ENCODE measurements at regions of chr7 and their contacts with region 1.

Region 1: DNA sequence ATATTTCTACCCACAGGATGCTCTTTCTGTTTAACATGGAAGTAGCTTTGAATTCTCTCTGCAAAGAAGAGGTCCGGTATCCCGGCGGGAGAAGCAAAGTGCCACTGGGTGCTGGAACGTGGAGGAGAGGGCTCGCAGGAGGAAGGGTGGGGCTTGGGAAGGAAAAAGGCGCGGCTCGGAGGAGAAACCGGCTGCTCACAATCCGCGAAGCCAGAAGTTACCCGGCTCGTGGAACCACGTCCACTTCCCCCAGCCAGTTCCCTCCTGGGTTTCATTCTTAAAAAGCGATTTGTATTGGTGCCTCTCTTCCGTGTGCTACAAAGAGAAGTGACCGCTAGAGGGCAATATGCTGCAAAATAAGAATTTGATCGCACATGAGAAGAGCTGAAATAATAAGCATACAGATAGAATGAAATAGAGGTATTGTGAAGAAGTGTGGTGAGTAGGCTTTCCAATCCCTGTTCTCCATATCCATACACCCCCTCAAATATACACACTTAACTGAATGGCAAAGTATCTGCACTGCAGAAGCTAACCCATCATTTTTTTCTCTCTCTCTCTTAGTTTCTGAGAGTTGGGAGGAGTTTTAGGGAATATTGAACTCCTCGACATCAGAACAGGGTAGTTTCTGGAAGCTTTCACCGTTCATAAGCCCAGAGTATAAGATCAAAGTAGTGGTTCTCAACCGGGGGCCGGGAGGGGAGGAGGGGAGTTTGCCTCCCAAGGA is 31.1 kb downstream of the TRIL start:
- DNase-seq: peak; percentile 84
- ATAC-seq: peak; percentile 93
- H3K4me3 ChIP-seq: peak overlapping the region; percentile 28 to 61 (median 54)
- H3K4me3 Mint-ChIP-seq: peak overlapping the region; percentile 94
- H3K27ac ChIP-seq: no peak overlapping the region
- H3K27ac Mint-ChIP-seq: no peak overlapping the region
- H3K4me1 ChIP-seq: peaks cover 10 to 21% of the 10 kb centered on the region in 2 donors
- H3K4me1 Mint-ChIP-seq: peaks cover 23% of the 10 kb centered on the region
- H3K27me3 ChIP-seq: no peaks in the 10 kb centered on the region
- H3K27me3 Mint-ChIP-seq: peaks cover 14% of the 10 kb centered on the region
- CTCF ChIP-seq: peak; percentile 85

Region 2: GRCh38 chr7:28908775-28909174 is 18.3 kb before region 1 on chr7:
- CTCF ChIA-PET with region 1: interaction called, 128 read pairs
- POLR2A ChIA-PET with region 1: no interaction called
- intact Hi-C with region 1: no loop called
- DNase-seq: no peak
- ATAC-seq: no peak
- H3K4me3 ChIP-seq: no peak overlapping the region
- H3K4me3 Mint-ChIP-seq: no peak overlapping the region
- H3K27ac ChIP-seq: no peak overlapping the region
- H3K27ac Mint-ChIP-seq: no peak overlapping the region
- H3K4me1 ChIP-seq: no peaks in the 10 kb centered on the region
- H3K4me1 Mint-ChIP-seq: no peaks in the 10 kb centered on the region
- H3K27me3 ChIP-seq: peaks cover 0 to 5% (median 1%) of the 10 kb centered on the region in 4 experiments
- H3K27me3 Mint-ChIP-seq: peaks cover 19% of the 10 kb centered on the region
- CTCF ChIP-seq: no peak

Region 3: GRCh38 chr7:28939844-28940544 is 13.0 kb after region 1 on chr7:
- CTCF ChIA-PET with region 1: interaction called, 127 read pairs
- POLR2A ChIA-PET with region 1: no interaction called
- intact Hi-C with region 1: no loop called
- DNase-seq: no peak
- ATAC-seq: no peak
- H3K4me3 ChIP-seq: no peak overlapping the region
- H3K4me3 Mint-ChIP-seq: no peak overlapping the region
- H3K27ac ChIP-seq: no peak overlapping the region
- H3K27ac Mint-ChIP-seq: no peak overlapping the region
- H3K4me1 ChIP-seq: no peaks in the 10 kb centered on the region
- H3K4me1 Mint-ChIP-seq: no peaks in the 10 kb centered on the region
- H3K27me3 ChIP-seq: peaks cover 0 to 6% (median 2%) of the 10 kb centered on the region in 4 experiments
- H3K27me3 Mint-ChIP-seq: peaks cover 48% of the 10 kb centered on the region
- CTCF ChIP-seq: no peak

Region 4: DNA sequence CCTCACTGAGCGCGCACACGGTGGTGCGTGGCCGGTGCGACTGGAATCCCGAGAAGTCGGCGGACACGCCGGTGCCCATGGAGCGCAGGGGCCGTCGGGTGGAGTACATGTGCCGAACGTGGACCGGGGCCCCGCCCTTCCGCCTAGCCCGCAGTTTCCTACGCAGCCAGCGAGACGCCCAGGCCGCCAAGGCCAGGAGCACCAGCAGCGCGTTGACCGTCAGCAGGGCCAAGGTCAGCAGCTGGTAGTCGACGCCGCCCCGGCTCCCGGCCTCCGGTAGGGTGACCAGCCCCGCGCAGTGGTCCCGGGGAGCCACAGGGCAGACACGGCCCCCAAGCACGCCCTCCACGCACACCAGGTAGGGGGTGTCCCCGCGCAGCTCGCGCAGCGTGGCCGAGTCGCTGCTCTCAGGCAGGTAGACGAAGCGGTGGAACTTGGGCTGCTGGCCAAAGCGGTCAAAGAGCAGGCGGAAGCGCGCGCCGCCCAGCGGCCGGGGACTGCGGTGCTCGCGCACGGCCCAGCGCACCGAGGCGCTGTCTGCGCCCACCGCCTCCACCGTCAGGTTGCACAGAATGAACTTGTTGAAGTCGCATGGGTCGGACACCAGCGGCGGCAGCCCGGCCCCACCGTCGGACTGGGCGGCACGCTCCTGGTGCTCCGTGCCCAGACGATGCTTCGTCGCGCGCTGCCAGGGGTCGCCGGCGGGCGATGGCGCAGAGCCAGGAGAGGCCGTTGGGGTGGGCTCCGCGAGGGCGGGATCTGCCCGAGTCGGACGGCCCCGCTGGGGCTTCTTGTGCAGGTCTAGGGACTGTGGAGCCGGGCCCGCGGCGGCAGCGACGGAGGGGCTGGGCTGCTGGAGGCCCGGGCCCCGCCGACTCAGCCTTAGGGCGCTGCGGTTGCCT is 28.9 kb after region 1 on chr7:
- CTCF ChIA-PET with region 1: interaction called, 21 read pairs
- POLR2A ChIA-PET with region 1: no interaction called
- intact Hi-C with region 1: no loop called
- DNase-seq: peak; percentile 37
- ATAC-seq: no peak
- H3K4me3 ChIP-seq: peak overlapping the region in 4 of 5 experiments; percentile 13 to 39 (median 32)
- H3K4me3 Mint-ChIP-seq: peak overlapping the region; percentile 53
- H3K27ac ChIP-seq: no peak overlapping the region
- H3K27ac Mint-ChIP-seq: no peak overlapping the region
- H3K4me1 ChIP-seq: peaks cover 22 to 29% of the 10 kb centered on the region in 2 donors
- H3K4me1 Mint-ChIP-seq: peaks cover 19% of the 10 kb centered on the region
- H3K27me3 ChIP-seq: peaks cover 0 to 50% (median 25%) of the 10 kb centered on the region in 4 experiments
- H3K27me3 Mint-ChIP-seq: peaks cover 68% of the 10 kb centered on the region
- CTCF ChIP-seq: peak; percentile 37

Region 5: DNA sequence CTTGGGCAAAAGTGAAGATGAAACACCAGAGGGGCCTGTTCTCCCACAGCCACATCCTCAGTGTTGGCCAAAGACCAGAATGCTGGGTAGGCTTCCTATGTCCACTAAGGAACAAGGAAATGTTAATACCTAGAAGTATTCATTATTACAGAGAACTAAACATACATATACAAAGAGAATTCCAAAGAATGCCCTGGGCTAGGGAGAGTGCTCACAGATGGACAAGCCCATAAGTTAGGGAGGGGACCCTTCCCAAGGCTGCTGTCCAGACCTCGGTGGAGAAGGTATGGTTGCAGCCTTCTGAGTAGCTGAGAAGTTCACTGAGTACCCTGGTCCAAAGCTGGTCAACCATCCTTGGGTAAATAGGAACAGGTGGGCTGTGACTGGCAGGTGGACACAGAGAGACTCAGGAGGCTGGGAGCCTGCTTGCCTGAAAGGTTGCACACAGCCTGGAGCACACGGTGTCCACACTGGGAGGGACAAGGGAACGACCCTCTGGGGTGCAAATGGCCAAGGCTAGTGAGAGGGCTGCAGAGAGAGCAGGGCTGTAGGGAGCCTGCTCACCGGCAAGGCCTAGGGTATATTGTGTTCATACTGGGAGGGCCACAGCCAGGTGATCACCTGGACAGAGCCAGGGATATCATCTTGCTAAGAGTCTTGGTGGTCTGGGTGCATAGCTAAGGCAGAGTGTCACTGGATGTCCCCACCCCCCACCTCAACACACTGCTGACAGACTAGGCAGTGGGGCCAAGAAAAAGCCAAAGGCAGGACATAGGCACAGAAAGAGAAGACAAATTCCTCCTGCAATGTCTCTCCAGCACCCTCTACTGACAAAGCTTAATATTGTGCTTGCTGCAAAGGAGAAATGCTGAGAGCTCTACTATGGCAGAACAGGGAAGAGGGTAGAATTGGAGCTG is 179.0 kb after region 1 on chr7:
- CTCF ChIA-PET with region 1: interaction called, 13 read pairs
- POLR2A ChIA-PET with region 1: no interaction called
- intact Hi-C with region 1: loop called (anchors 1 kb)
- DNase-seq: peak; percentile 36
- ATAC-seq: peak; percentile 39
- H3K4me3 ChIP-seq: no peak overlapping the region
- H3K4me3 Mint-ChIP-seq: no peak overlapping the region
- H3K27ac ChIP-seq: no peak overlapping the region
- H3K27ac Mint-ChIP-seq: no peak overlapping the region
- H3K4me1 ChIP-seq: peaks cover 0 to 4% of the 10 kb centered on the region in 2 donors
- H3K4me1 Mint-ChIP-seq: peaks cover 3% of the 10 kb centered on the region
- H3K27me3 ChIP-seq: no peaks in the 10 kb centered on the region
- H3K27me3 Mint-ChIP-seq: peaks cover 21% of the 10 kb centered on the region
- CTCF ChIP-seq: peak; percentile 61

Region 6: GRCh38 chr7:29408841-29409243 is 481.8 kb after region 1 on chr7:
- CTCF ChIA-PET with region 1: interaction called, 304 read pairs
- POLR2A ChIA-PET with region 1: no interaction called
- intact Hi-C with region 1: loop called (anchors 1 kb)
- DNase-seq: peak; percentile 70
- ATAC-seq: peak; percentile 28
- H3K4me3 ChIP-seq: no peak overlapping the region
- H3K4me3 Mint-ChIP-seq: no peak overlapping the region
- H3K27ac ChIP-seq: no peak overlapping the region
- H3K27ac Mint-ChIP-seq: no peak overlapping the region
- H3K4me1 ChIP-seq: no peaks in the 10 kb centered on the region
- H3K4me1 Mint-ChIP-seq: no peaks in the 10 kb centered on the region
- H3K27me3 ChIP-seq: peaks cover 0 to 2% (median 0%) of the 10 kb centered on the region in 4 experiments
- H3K27me3 Mint-ChIP-seq: peaks cover 19% of the 10 kb centered on the region
- CTCF ChIP-seq: peak; percentile 96